Common myeloid progenitor, CD34-positive (primary cell): ENCODE measurements at regions of chr10 and their contacts with region 1.

Region 1: DNA sequence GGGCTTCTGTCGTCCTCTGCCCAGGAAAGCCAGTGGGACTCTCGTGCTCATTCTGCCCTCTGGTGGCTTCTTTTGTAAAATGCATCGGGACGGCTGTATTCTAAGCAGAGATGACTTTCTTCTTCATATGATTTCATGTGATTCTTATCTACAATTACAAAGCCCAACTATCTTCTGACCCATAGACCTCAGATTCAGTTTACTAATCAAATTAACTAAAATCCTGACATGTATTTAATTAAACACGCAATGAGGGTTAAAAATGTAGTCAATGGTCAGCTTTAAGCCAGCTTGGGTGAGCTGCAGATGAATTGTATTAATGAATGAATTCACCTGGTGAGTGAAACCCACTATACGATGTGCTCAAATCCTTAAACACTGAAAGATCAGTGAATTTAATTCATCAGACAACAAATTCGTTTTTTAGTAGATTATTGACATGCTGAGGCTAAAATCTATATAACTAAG is 117.6 kb upstream of the FAM204A start:
- DNase-seq: peak; percentile 34 to 57 (median 43)
- H3K4me3 ChIP-seq: peak overlapping the region in 1 of 7 experiments; percentile 36
- H3K27ac ChIP-seq: no peak overlapping the region
- H3K4me1 ChIP-seq: peaks cover 0 to 3% (median 0%) of the 10 kb centered on the region in 4 experiments
- H3K27me3 ChIP-seq: peaks cover 3 to 26% (median 5%) of the 10 kb centered on the region in 5 experiments

Region 2: DNA sequence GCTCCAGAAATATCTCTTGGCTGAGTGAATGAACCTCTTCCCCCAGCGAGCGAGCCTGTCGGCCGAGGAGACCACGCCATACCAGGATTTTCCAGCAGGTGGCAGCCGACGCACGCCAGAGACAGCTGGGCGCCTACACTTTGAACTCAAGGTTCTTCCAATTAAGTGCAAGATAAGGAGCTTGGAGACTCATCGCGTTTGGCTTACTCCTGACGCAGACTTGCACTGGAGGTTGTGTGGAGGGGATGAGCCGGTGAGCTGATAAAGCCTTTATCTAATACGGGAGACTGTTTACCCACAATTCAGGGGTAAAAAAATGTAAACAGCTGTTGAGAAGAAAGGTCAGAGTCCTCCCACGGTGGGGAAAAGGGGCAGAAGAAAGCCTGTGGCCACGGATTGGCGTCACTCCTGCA is 963.1 kb before region 1 on chr10:
- CTCF ChIA-PET with region 1: interaction called, 16 read pairs
- POLR2A ChIA-PET with region 1: no interaction called
- DNase-seq: peak; percentile 69 to 86 (median 83)
- H3K4me3 ChIP-seq: no peak overlapping the region
- H3K27ac ChIP-seq: no peak overlapping the region
- H3K4me1 ChIP-seq: peaks cover 0 to 2% (median 0%) of the 10 kb centered on the region in 4 experiments
- H3K27me3 ChIP-seq: peaks cover 4 to 19% (median 16%) of the 10 kb centered on the region in 5 experiments

Region 3: GRCh38 chr10:118447478-118448270 is 12.1 kb before region 1 on chr10:
- CTCF ChIA-PET with region 1: interaction called, 11 read pairs
- POLR2A ChIA-PET with region 1: no interaction called
- DNase-seq: no peak
- H3K4me3 ChIP-seq: no peak overlapping the region
- H3K27ac ChIP-seq: no peak overlapping the region
- H3K4me1 ChIP-seq: no peaks in the 10 kb centered on the region
- H3K27me3 ChIP-seq: peaks cover under 1 to 49% (median 9%) of the 10 kb centered on the region in 5 experiments

Region 4: GRCh38 chr10:118471863-118472262 is 12.1 kb after region 1 on chr10:
- CTCF ChIA-PET with region 1: interaction called, 10 read pairs
- POLR2A ChIA-PET with region 1: no interaction called
- DNase-seq: no peak
- H3K4me3 ChIP-seq: no peak overlapping the region
- H3K27ac ChIP-seq: no peak overlapping the region
- H3K4me1 ChIP-seq: peaks cover 0 to 1% (median 0%) of the 10 kb centered on the region in 4 experiments
- H3K27me3 ChIP-seq: peaks cover 0 to 29% (median 3%) of the 10 kb centered on the region in 5 experiments

Region 5: DNA sequence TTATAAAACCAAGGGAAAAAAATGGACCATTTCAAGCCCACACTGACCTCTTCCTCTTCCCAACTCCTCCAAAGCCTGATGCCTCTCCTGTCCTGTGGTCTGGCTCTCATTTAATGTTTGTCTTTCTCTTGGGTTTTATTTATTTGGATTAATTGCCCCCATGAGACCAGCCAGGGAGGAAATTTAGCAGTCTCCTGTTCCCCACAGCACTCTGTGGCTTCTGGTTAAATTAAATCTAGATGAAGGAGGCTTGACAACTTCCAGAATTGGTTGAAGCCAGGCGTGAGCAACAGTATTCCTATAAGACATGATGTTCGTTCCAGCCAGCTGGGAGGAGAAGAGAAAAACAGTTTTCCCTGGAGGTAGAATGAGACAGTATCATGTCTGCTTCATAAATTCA is 150.8 kb after region 1 on chr10:
- CTCF ChIA-PET with region 1: no interaction called
- POLR2A ChIA-PET with region 1: no interaction called
- DNase-seq: no peak
- H3K4me3 ChIP-seq: no peak overlapping the region
- H3K27ac ChIP-seq: no peak overlapping the region
- H3K4me1 ChIP-seq: no peaks in the 10 kb centered on the region
- H3K27me3 ChIP-seq: peaks cover 0 to 29% (median 2%) of the 10 kb centered on the region in 5 experiments